GM13976 (cell line): ENCODE measurements at regions of chr19 and their contacts with region 1.

Region 1: DNA sequence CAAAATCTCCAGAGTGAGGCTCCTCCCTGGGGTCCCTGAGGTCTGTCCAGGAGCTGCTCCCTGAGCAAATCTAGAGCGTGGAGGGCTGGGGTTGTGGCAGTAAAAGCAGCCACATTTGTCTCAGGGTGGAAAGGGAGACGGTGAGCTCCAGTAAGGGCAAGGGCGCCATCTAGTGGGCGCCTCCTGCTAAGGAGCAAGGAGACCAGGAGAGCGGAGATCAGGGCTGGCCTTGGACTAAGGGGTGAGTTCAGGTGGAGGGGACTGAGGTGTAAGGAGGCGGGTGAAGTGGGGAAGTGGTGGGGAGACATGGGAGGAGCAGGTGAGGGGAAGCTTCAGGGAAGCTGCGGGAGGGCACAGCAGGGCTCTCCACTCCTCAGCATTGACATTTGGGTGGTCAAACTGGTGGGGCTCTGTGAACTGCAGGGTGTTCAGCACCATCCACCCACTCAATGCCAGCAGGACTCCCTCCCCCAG is 5.3 kb upstream of the CEACAM21 start:
- DNase-seq: peak; percentile 81
- CTCF ChIP-seq: peak; percentile 94

Region 2: GRCh38 chr19:41439441-41440222 is 131.0 kb before region 1 on chr19 and contains the start of gene DMAC2:
- in situ Hi-C with region 1: loop called (anchors 5 kb)
- DNase-seq: peak; percentile 93
- CTCF ChIP-seq: peak; percentile 66

Region 3: GRCh38 chr19:41626877-41627276 is 56.2 kb after region 1 on chr19 and contains the start of gene CEACAM4:
- in situ Hi-C with region 1: no loop called
- DNase-seq: no peak
- CTCF ChIP-seq: no peak

Region 4: GRCh38 chr19:41785653-41786052 is 215.0 kb after region 1 on chr19:
- in situ Hi-C with region 1: no loop called
- DNase-seq: peak; percentile 83
- CTCF ChIP-seq: peak; percentile 88